GM12878 (cell line): ENCODE measurements at regions of chr10 and their contacts with region 1.

Region 1: DNA sequence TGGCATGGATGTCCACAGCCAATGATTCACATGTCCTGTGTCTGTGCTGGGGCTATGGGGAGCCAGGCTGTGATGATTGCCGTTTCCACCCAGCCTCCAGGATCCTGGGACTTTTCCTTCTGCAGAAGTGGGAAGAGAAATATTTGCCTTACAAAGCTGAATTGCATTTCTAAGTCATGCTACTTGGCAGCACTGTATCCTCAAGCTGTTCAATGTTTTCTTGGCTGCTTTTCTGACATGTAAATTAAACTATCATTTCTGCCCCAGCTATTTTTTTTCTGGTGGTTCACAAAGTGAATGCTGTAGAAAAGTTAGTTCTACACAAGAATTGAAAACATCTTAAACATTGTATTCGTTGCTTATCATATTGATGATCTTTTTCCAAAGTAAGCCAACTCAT is 51.9 kb upstream of the TCERG1L start:
- DNase-seq: no peak
- ATAC-seq: no peak
- H3K4me3 ChIP-seq: no peak overlapping the region
- H3K27ac ChIP-seq: no peak overlapping the region
- H3K4me1 ChIP-seq: no peaks in the 10 kb centered on the region
- H3K27me3 ChIP-seq: no peaks in the 10 kb centered on the region
- CTCF ChIP-seq: no peak
- EP300 ChIP-seq: no peak
- POLR2A ChIP-seq: no peak
- RAD21 ChIP-seq: no peak

Region 2: DNA sequence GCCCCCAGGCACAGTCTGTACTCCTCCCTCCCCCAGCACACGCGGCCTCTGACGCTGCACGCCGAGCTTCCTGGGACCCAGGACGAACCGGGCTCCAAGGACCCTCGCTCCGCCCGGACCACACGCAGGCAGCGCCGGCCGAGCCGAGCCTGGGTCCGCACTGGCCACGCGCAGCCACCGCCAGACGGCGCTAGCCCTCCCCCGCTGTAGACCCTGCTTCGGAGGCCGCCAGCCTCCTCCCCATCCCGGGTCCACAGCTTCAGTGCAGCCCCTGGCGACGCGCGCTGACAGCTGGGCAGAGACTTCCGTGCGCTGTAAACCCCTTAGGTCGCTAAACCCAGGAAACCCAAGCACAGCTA is 51.0 kb before region 1 on chr10:
- CTCF ChIA-PET with region 1: no interaction called
- POLR2A ChIA-PET with region 1: no interaction called
- RAD21 ChIA-PET with region 1: no interaction called
- SMC1A ChIA-PET with region 1: no interaction called
- in situ Hi-C with region 1: loop called (anchors 5 kb)
- intact Hi-C with region 1: no loop called
- DNase-seq: no peak
- ATAC-seq: no peak
- H3K4me3 ChIP-seq: no peak overlapping the region
- H3K27ac ChIP-seq: no peak overlapping the region
- H3K4me1 ChIP-seq: no peaks in the 10 kb centered on the region
- H3K27me3 ChIP-seq: peaks cover 0 to 5% of the 10 kb centered on the region in 2 experiments; a peak in 1 of 4 replicates
- CTCF ChIP-seq: peak in 1 of 3 experiments; percentile 9; a peak in 1 of 6 replicates
- EP300 ChIP-seq: no peak
- POLR2A ChIP-seq: no peak
- RAD21 ChIP-seq: no peak

Region 3: GRCh38 chr10:131396121-131397050 is 33.0 kb after region 1 on chr10:
- CTCF ChIA-PET with region 1: no interaction called
- POLR2A ChIA-PET with region 1: no interaction called
- RAD21 ChIA-PET with region 1: no interaction called
- SMC1A ChIA-PET with region 1: no interaction called
- in situ Hi-C with region 1: no loop called
- intact Hi-C with region 1: no loop called
- DNase-seq: no peak
- ATAC-seq: no peak
- H3K4me3 ChIP-seq: no peak overlapping the region
- H3K27ac ChIP-seq: no peak overlapping the region
- H3K4me1 ChIP-seq: no peaks in the 10 kb centered on the region
- H3K27me3 ChIP-seq: no peaks in the 10 kb centered on the region
- CTCF ChIP-seq: no peak
- EP300 ChIP-seq: no peak
- POLR2A ChIP-seq: no peak
- RAD21 ChIP-seq: no peak